Mammary epithelial cell (primary cell): ENCODE measurements at regions of chr5 and their contacts with region 1.

Region 1: GRCh38 chr5:157971571-157972216 is 112.7 kb upstream of the CLINT1 start:
- DNase-seq: no peak
- H3K4me3 ChIP-seq: no peak overlapping the region
- H3K27ac ChIP-seq: no peak overlapping the region
- H3K4me1 ChIP-seq: no peaks in the 10 kb centered on the region
- H3K27me3 ChIP-seq: no peaks in the 10 kb centered on the region
- CTCF ChIP-seq: no peak

Region 2: DNA sequence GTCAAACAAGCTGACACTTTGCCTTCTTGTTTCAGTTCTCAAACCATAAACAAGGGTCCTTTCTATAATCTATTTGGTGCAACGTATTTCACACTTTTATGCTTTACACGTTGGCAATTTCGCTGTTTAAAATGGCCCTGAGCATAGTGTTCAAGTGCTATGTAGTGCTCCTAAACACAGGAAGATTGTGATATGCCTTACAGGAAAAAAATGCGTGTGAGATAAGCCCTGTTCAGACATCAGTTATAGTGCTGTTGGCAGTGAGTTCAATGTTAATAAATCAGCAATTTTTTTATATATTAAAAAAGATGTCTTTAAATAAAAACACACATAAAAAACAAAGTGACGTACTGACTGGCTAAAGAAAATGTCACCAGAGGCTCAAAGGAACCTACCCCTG is 136.7 kb before region 1 on chr5:
- CTCF ChIA-PET with region 1: interaction called, 11 read pairs
- dilution Hi-C with region 1: no loop called
- in situ Hi-C with region 1: no loop called
- intact Hi-C with region 1: no loop called
- DNase-seq: no peak
- H3K4me3 ChIP-seq: no peak overlapping the region
- H3K27ac ChIP-seq: no peak overlapping the region
- H3K4me1 ChIP-seq: no peaks in the 10 kb centered on the region
- H3K27me3 ChIP-seq: no peaks in the 10 kb centered on the region
- CTCF ChIP-seq: no peak

Region 3: GRCh38 chr5:158300256-158300655 is 328.6 kb after region 1 on chr5:
- CTCF ChIA-PET with region 1: no interaction called
- dilution Hi-C with region 1: no loop called
- in situ Hi-C with region 1: no loop called
- intact Hi-C with region 1: no loop called
- DNase-seq: no peak
- H3K4me3 ChIP-seq: no peak overlapping the region
- H3K27ac ChIP-seq: no peak overlapping the region
- H3K4me1 ChIP-seq: no peaks in the 10 kb centered on the region
- H3K27me3 ChIP-seq: no peaks in the 10 kb centered on the region
- CTCF ChIP-seq: no peak